ENCODE measurements at regions of chr6 and their contacts with region 1.

Region 1: GRCh38 chr6:42547407-42548329 is 16.2 kb upstream of the UBR2 start:
- DNase-seq: peak; percentile 94
- ATAC-seq: peak; percentile 99
- H3K4me3 Mint-ChIP-seq: peak overlapping the region; percentile 56
- H3K27ac Mint-ChIP-seq: peak overlapping the region; percentile 63
- H3K4me1 Mint-ChIP-seq: peaks cover 15% of the 10 kb centered on the region
- H3K27me3 Mint-ChIP-seq: peaks cover 10% of the 10 kb centered on the region

Region 2: GRCh38 chr6:42050266-42051032 is 497.2 kb before region 1 on chr6 and contains the start of gene TAF8:
- CTCF ChIA-PET with region 1: no interaction called
- POLR2A ChIA-PET with region 1: no interaction called
- intact Hi-C with region 1: no loop called
- DNase-seq: peak; percentile 94
- ATAC-seq: peak; percentile 76
- H3K4me3 Mint-ChIP-seq: peak within 1 kb of the TSS; percentile 88
- H3K27ac Mint-ChIP-seq: peak within 1 kb of the TSS; percentile 96
- H3K4me1 Mint-ChIP-seq: peaks cover 64% of the 10 kb centered on the region
- H3K27me3 Mint-ChIP-seq: no peaks in the 10 kb centered on the region
- total RNA-seq, gene TAF8: 52.3 to 53.1 TPM

Region 3: GRCh38 chr6:42254505-42254904 is 293.2 kb before region 1 on chr6:
- CTCF ChIA-PET with region 1: interaction called, 101 read pairs
- POLR2A ChIA-PET with region 1: no interaction called
- intact Hi-C with region 1: no loop called
- DNase-seq: no peak
- ATAC-seq: no peak
- H3K4me3 Mint-ChIP-seq: no peak overlapping the region
- H3K27ac Mint-ChIP-seq: no peak overlapping the region
- H3K4me1 Mint-ChIP-seq: peaks cover 5% of the 10 kb centered on the region
- H3K27me3 Mint-ChIP-seq: no peaks in the 10 kb centered on the region

Region 4: DNA sequence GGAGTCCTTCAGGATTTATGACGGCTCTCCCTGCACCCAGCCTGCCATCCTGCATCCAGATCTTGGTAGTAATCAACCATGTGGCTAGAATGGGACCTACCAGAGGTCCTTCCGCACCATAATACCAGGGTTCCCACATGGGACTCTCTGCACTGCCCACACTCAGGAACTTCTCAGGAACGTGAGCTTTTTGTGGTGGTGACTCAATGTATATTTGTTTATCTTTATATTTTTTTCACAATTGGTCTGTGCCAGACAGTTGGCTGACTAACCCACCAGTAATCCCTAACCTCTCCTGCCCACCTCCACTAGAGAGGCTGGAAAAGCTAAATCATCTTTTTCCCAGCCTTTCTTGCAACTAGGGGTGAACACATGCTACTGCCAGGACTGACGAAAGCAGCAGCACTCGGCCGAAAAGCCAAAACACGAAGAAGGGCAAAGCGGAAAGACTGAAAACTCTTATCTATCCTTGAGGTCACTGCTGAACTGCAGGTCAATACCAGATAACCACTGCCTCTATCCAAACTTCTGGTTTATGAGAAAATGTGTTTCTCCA is 208.9 kb before region 1 on chr6:
- CTCF ChIA-PET with region 1: interaction called, 12 read pairs
- POLR2A ChIA-PET with region 1: interaction called, 3 read pairs
- intact Hi-C with region 1: no loop called
- DNase-seq: peak; percentile 42
- ATAC-seq: peak; percentile 28
- H3K4me3 Mint-ChIP-seq: peak overlapping the region; percentile 8
- H3K27ac Mint-ChIP-seq: peak overlapping the region; percentile 84
- H3K4me1 Mint-ChIP-seq: peaks cover 67% of the 10 kb centered on the region
- H3K27me3 Mint-ChIP-seq: no peaks in the 10 kb centered on the region

Region 5: DNA sequence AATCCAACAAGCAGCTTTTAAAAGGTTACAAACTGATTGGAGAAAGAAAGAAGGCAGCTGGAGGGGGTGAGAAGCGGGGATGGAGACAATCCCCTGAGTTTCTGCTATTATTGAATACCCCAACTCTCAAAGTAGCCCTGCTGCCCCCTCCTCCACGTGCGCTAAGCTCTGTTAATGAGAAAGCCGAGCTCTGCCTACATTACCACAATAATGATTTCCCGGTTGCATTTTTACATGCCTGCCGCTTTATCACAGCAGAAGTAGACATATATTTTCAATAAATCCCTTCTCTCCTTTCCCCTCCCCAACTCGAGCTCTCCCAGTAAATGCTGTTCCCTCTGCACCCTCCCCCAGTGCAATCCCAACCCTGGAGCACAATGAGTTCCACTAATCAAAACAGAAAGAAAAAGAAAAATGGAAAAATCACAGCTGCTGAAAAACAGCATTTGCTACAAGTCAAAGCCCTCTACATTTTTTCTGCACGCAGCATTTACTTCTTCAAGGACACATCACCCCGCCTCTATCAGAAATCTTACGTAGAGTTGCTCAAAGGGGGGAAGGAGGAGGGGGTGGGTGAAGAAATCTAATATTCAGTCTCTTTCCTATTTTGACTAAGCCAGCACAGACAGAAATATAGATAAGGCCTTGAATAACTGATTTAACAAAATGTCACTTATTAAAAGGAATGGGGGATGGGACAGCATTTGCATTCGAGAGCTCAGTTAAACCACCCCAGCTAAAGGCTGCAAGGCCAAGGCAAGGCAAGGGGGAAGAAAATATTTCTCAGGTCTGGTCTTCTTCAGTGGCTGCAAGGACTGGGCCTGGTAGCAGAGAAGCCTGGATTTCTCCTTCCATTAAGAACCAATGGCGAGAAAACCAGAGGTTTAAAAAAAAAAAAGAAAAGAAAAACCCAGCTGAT is 106.6 kb before region 1 on chr6:
- CTCF ChIA-PET with region 1: interaction called, 16 read pairs
- POLR2A ChIA-PET with region 1: no interaction called
- intact Hi-C with region 1: no loop called
- DNase-seq: no peak
- ATAC-seq: peak; percentile 17
- H3K4me3 Mint-ChIP-seq: peak overlapping the region; percentile 51
- H3K27ac Mint-ChIP-seq: peak overlapping the region; percentile 66
- H3K4me1 Mint-ChIP-seq: peaks cover 58% of the 10 kb centered on the region
- H3K27me3 Mint-ChIP-seq: no peaks in the 10 kb centered on the region

Region 6: DNA sequence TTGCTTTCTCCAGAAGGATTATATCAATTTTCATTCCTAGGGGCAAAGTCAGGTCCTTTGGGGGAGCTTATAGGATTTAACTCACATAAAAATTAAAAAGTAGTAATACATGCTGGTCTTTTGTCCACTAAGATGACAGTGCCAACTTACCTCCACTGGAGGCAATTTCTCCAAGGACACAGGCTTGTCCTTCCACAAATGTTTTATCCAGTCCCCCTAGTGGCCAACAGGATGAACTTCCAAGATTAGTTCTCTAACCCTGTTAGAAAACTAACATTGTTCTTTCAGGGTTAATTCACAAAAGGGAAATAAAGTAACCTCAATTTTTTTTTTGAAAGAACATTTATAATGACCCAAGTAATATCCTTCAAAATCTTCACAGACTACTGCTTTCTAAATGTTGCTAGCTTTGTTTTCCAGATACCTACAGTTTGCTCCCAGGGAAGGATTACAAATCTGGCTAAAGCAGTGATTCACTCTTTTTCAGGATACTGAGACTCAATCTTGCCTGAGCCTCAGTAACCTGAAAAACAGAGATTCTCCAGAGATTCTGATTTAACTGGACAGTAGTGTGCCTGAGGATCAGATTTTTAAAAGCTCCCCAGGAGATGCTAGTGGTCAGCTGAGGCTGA is 15.5 kb before region 1 on chr6:
- CTCF ChIA-PET with region 1: interaction called, 25 read pairs
- POLR2A ChIA-PET with region 1: no interaction called
- intact Hi-C with region 1: no loop called
- DNase-seq: peak; percentile 31
- ATAC-seq: peak; percentile 65
- H3K4me3 Mint-ChIP-seq: no peak overlapping the region
- H3K27ac Mint-ChIP-seq: no peak overlapping the region
- H3K4me1 Mint-ChIP-seq: no peaks in the 10 kb centered on the region
- H3K27me3 Mint-ChIP-seq: peaks cover 2% of the 10 kb centered on the region

Region 7: GRCh38 chr6:42692137-42692911 is 144.7 kb after region 1 on chr6:
- CTCF ChIA-PET with region 1: no interaction called
- POLR2A ChIA-PET with region 1: no interaction called
- intact Hi-C with region 1: no loop called
- DNase-seq: peak; percentile 26
- ATAC-seq: peak; percentile 52
- H3K4me3 Mint-ChIP-seq: no peak overlapping the region
- H3K27ac Mint-ChIP-seq: peak overlapping the region; percentile 29
- H3K4me1 Mint-ChIP-seq: peaks cover 23% of the 10 kb centered on the region
- H3K27me3 Mint-ChIP-seq: no peaks in the 10 kb centered on the region

Region 8: GRCh38 chr6:42963855-42964605 is 416.4 kb after region 1 on chr6:
- CTCF ChIA-PET with region 1: no interaction called
- POLR2A ChIA-PET with region 1: no interaction called
- intact Hi-C with region 1: no loop called
- DNase-seq: peak; percentile 68
- ATAC-seq: peak; percentile 83
- H3K4me3 Mint-ChIP-seq: no peak overlapping the region
- H3K27ac Mint-ChIP-seq: no peak overlapping the region
- H3K4me1 Mint-ChIP-seq: peaks cover 11% of the 10 kb centered on the region
- H3K27me3 Mint-ChIP-seq: no peaks in the 10 kb centered on the region